HAP-1 (cell line): ENCODE measurements at regions of chr16 and their contacts with region 1.

Region 1: DNA sequence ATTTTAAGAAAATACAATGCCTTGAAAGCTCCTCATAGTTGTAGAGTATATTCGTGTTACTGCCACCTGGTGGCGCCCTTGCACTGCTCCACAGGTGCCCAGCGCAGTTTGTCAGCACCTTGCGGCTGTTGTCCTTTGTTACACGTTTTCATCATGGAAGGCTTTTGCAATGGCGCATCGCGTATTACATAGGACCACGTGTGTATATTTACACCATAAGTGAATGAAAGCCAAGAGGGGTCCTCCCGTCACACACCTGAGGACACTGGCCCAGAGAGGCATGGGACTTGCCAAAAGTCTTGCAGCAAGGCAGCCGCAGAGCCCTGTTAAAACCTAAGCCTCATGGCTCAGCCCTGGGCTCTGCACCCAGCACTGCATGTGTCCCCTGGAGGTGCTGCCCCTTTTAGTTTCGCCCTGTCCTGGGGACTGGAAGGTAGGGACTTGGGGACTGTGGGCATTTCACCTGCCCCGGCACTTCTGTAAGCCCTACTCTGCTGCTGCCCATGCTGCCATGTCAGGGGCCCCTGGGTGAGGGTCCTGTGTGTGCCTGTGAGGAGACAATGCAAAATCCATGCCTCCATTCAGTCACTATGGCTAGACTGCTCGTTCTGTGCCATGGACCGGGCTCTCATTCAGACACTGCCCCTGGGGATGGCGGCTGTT is 24.3 kb downstream of the POLR3E start:
- DNase-seq: peak; percentile 79
- H3K4me3 ChIP-seq: no peak overlapping the region
- H3K4me1 ChIP-seq: no peaks in the 10 kb centered on the region
- H3K27me3 ChIP-seq: no peaks in the 10 kb centered on the region

Region 2: GRCh38 chr16:21565861-21566669 is 755.4 kb before region 1 on chr16:
- in situ Hi-C with region 1: loop called (anchors 10 kb)
- DNase-seq: no peak
- H3K4me3 ChIP-seq: no peak overlapping the region
- H3K4me1 ChIP-seq: no peaks in the 10 kb centered on the region
- H3K27me3 ChIP-seq: no peaks in the 10 kb centered on the region

Region 3: DNA sequence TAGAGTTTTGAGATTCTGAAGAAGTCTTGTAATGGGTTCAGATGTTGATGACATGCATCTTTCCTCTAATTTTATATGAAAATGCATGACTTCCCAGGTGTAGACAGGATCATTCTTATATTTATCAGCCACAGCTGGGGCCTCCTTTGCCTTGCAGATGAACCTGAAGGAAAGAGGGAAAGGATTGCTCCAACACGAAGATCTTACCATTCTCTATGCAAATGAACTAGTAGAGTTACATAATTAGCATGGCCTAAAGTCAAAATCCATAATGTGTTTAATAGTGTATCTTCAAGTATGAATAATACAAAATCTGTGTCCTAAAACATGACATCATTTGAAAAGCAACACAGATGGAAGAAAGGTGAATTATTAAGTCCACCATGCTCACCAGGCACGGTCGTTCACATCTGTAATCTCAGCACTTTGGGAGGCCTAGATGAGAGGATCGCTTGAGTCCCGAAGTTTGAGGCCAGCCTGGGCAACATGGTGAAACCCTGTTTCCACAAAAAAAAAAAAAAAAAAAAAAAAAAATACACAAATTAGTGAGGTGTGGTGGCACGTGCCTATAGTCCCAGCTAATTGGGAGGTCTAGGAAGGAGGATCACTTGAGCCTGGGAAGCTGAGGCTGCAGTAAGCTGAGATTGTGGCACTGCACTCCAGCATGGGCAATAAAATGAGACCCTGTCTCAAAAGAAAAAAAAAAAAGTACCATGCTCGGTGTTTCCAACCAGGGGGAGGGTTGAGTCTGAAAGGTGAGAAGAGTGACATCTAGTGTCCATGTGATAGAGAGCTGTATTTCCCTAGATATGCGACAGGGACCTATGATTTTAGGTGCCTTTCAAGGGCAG is 222.8 kb before region 1 on chr16:
- in situ Hi-C with region 1: no loop called
- DNase-seq: peak; percentile 47 to 76
- H3K4me3 ChIP-seq: no peak overlapping the region
- H3K4me1 ChIP-seq: peaks cover 6% of the 10 kb centered on the region; the same call in 1 of the 2 replicates
- H3K27me3 ChIP-seq: no peaks in the 10 kb centered on the region

Region 4: DNA sequence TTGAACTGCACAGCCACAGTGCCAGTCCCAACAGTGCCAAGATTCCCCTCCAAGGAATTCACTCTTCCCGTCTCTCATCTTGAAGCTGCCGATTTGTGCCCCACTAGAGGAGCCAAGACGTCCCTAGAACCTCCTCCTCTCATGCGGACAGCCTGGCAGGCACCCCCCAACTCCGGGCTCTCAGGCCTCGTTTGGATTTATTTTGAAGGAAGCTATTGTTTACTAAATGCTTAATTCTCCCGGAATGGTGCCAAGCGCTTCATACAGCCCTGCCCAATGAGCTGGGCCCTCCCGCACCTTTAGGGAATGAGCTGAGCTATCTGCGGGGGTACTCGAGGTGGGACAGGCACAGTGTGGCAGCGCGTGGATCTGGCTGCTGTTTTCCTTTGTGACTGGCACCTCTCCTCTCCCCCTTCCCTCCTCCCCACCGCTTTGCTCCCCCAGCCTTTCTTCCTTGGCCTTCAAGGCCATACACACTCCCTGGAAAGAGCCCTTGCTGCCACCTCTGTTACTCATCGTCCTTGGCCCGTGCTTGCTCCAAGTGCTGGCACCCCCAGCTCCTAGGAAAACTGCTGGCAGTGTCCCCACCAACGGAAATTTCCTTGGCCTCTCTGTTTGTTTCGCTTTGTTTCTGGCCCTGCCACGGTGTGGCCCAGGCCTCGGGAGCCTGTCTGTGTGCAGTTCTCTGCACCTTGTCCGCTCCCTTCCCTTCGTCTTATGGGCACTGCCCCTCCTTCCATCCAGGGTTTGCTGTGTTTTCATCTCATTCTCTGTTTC is 102.9 kb after region 1 on chr16:
- in situ Hi-C with region 1: loop called (anchors 25 kb)
- DNase-seq: no peak
- H3K4me3 ChIP-seq: no peak overlapping the region
- H3K4me1 ChIP-seq: no peaks in the 10 kb centered on the region
- H3K27me3 ChIP-seq: no peaks in the 10 kb centered on the region

Region 5: DNA sequence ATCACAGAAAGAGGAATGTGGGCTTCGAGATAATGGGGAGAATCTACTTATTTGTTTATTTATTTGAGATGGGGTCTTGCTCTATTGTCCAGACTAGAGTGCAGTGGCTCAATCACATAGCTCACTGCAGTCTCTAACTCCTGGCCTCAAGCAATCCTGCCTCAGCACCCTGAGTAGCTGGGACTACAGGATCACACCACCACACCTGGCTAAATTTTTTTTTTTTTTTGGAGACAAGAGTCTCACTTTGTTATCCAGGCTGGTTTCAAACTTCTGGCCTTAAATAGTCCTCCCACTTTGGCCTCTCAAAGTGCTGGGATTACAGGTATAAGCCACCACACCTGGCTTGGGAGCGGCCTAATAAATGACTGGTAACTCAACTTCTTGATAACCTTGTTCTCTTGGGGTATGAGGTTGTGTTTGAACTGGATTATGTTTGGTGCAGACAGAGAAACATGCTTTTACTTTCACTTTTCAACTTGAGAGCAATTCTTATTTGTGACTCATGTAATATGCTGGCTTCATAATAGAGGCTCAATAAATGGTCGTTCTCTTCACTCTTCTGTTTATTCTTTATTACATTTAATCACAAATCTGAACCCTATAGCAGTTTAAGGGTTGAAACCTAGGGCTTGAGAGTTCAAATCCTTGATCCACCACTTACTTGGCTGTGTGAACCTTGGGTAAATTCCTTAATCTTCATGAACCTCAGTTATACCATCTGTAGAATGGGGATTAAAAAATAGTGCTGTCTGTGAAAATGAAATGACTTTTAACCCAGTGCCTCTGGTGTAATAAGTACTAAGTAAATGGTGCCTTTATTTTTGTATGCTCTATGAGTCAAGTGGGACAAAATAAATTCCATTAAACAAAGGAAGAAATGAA is 363.3 kb after region 1 on chr16:
- in situ Hi-C with region 1: no loop called
- DNase-seq: no peak
- H3K4me3 ChIP-seq: no peak overlapping the region
- H3K4me1 ChIP-seq: no peaks in the 10 kb centered on the region
- H3K27me3 ChIP-seq: no peaks in the 10 kb centered on the region